Naive thymus-derived CD4-positive, alpha-beta T cell (primary cell): ENCODE measurements at regions of chr3 and their contacts with region 1.

Region 1: GRCh38 chr3:50298836-50299637 is at the starts of genes HYAL3 and NAA80:
- DNase-seq: peak; percentile 94 to 100 (median 99)
- ATAC-seq: peak; percentile 93
- H3K4me3 ChIP-seq: peak within 1 kb of the TSS; percentile 97
- H3K4me3 Mint-ChIP-seq: peak within 1 kb of the TSS; percentile 84 to 99 (median 97)
- H3K27ac ChIP-seq: peak within 1 kb of the TSS; percentile 86
- H3K27ac Mint-ChIP-seq: peak within 1 kb of the TSS; percentile 90 to 100 (median 99)
- H3K4me1 ChIP-seq: peaks cover 19 to 20% of the 10 kb centered on the region in 2 donors
- H3K4me1 Mint-ChIP-seq: peaks cover 12 to 36% (median 22%) of the 10 kb centered on the region in 7 donors
- H3K27me3 ChIP-seq: no peaks in the 10 kb centered on the region
- H3K27me3 Mint-ChIP-seq: no peaks in the 10 kb centered on the region
- total RNA-seq, gene HYAL3: 3.4 to 10.7 (median 4.2) TPM
- total RNA-seq, gene NAA80: 30.2 to 44.9 (median 33.6) TPM

Region 2: GRCh38 chr3:48472915-48473616 is 1826.0 kb before region 1 on chr3:
- CTCF ChIA-PET with region 1: no interaction called
- POLR2A ChIA-PET with region 1: no interaction called
- intact Hi-C with region 1: loop called in 1 of 2 experiments (anchors 10 kb)
- DNase-seq: peak; percentile 79 to 98 (median 95)
- ATAC-seq: peak; percentile 93
- H3K4me3 ChIP-seq: peak overlapping the region; percentile 92
- H3K4me3 Mint-ChIP-seq: peak overlapping the region; percentile 87 to 100 (median 94)
- H3K27ac ChIP-seq: peak overlapping the region; percentile 95
- H3K27ac Mint-ChIP-seq: peak overlapping the region; percentile 90 to 100 (median 99)
- H3K4me1 ChIP-seq: peaks cover 46 to 54% of the 10 kb centered on the region in 2 donors
- H3K4me1 Mint-ChIP-seq: peaks cover 41 to 75% (median 64%) of the 10 kb centered on the region in 7 donors
- H3K27me3 ChIP-seq: no peaks in the 10 kb centered on the region
- H3K27me3 Mint-ChIP-seq: peaks cover 0 to 2% (median 0%) of the 10 kb centered on the region in 5 donors

Region 3: GRCh38 chr3:49802719-49803464 is 496.1 kb before region 1 on chr3 and contains the start of gene INKA1:
- CTCF ChIA-PET with region 1: no interaction called
- POLR2A ChIA-PET with region 1: no interaction called
- intact Hi-C with region 1: loop called in 1 of 2 experiments (anchors 10 kb)
- DNase-seq: peak; percentile 77 to 89 (median 87)
- ATAC-seq: peak; percentile 93
- H3K4me3 ChIP-seq: peak within 1 kb of the TSS; percentile 89
- H3K4me3 Mint-ChIP-seq: peak within 1 kb of the TSS; percentile 82 to 95 (median 90)
- H3K27ac ChIP-seq: peak within 1 kb of the TSS; percentile 84
- H3K27ac Mint-ChIP-seq: peak within 1 kb of the TSS; percentile 80 to 96 (median 91)
- H3K4me1 ChIP-seq: peaks cover 11 to 41% of the 10 kb centered on the region in 2 donors
- H3K4me1 Mint-ChIP-seq: peaks cover 23 to 47% (median 41%) of the 10 kb centered on the region in 7 donors
- H3K27me3 ChIP-seq: no peaks in the 10 kb centered on the region
- H3K27me3 Mint-ChIP-seq: peaks cover 0 to 20% (median 0%) of the 10 kb centered on the region in 5 donors
- total RNA-seq, gene INKA1: 0.65 to 2.2 (median 1.8) TPM

Region 4: GRCh38 chr3:50235716-50236496 is 63.1 kb before region 1 on chr3 and contains the start of gene GNAI2:
- CTCF ChIA-PET with region 1: interaction called, 3 read pairs
- POLR2A ChIA-PET with region 1: interaction called, 10 read pairs
- intact Hi-C with region 1: loop called (anchors 1 kb)
- DNase-seq: peak; percentile 95 to 99 (median 99)
- ATAC-seq: peak; percentile 93
- H3K4me3 ChIP-seq: peak within 1 kb of the TSS; percentile 90
- H3K4me3 Mint-ChIP-seq: peak within 1 kb of the TSS; percentile 92 to 99 (median 98)
- H3K27ac ChIP-seq: peak within 1 kb of the TSS; percentile 84
- H3K27ac Mint-ChIP-seq: peak within 1 kb of the TSS; percentile 87 to 97 (median 95)
- H3K4me1 ChIP-seq: peaks cover 30 to 35% of the 10 kb centered on the region in 2 donors
- H3K4me1 Mint-ChIP-seq: peaks cover 12 to 41% (median 37%) of the 10 kb centered on the region in 7 donors
- H3K27me3 ChIP-seq: no peaks in the 10 kb centered on the region
- H3K27me3 Mint-ChIP-seq: no peaks in the 10 kb centered on the region
- total RNA-seq, gene GNAI2: 225 to 442 (median 282) TPM

Region 5: GRCh38 chr3:50264370-50264963 is 34.6 kb before region 1 on chr3:
- CTCF ChIA-PET with region 1: no interaction called
- POLR2A ChIA-PET with region 1: no interaction called
- intact Hi-C with region 1: no loop called
- DNase-seq: no peak
- ATAC-seq: no peak
- H3K4me3 ChIP-seq: no peak overlapping the region
- H3K4me3 Mint-ChIP-seq: no peak overlapping the region
- H3K27ac ChIP-seq: no peak overlapping the region
- H3K27ac Mint-ChIP-seq: no peak overlapping the region
- H3K4me1 ChIP-seq: peaks cover 4 to 6% of the 10 kb centered on the region in 2 donors
- H3K4me1 Mint-ChIP-seq: peaks cover 0 to 8% (median 3%) of the 10 kb centered on the region in 7 donors
- H3K27me3 ChIP-seq: no peaks in the 10 kb centered on the region
- H3K27me3 Mint-ChIP-seq: peaks cover 0 to 30% (median 0%) of the 10 kb centered on the region in 5 donors

Region 6: DNA sequence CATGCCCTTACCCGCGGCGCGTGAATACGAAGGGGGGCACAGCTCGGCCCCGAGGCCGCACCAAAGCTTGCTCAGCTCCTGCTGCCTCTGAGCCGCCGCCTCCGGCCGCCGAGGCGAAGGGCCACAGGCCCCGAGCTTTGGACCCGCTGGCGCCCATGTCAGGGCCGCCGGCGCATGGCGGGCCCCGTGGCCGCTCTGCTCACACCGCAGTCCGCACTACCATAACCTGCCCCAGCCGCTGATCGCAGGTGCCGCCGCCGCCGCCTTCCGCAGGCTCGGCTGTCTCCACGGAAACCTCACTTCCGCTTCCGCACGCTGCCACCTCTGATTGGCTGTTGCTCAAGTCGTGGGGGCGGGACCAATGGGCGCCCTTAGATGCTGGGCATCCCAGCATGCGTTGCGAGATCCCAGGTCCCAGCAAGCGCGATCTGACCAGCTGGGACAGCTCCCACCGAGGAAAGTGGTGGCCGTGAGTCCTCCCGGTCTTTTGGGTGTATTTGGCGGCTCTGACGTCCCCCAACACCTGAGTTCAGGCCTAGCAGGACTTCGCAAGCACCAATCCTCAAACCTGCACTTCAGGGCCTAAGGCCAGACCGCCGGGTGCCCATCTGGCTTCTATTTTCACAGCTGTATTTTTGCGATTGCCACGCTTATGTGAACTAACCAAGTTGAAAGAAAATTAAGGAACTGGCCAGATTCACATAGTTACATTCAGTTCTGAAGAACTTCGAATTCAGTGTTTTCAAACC is 29.1 kb after region 1 on chr3 and contains the start of gene TUSC2:
- CTCF ChIA-PET with region 1: interaction called, 5 read pairs
- POLR2A ChIA-PET with region 1: interaction called, 31 read pairs
- intact Hi-C with region 1: loop called (anchors 1 to 2 kb)
- DNase-seq: peak; percentile 83 to 94 (median 92)
- ATAC-seq: peak; percentile 97
- H3K4me3 ChIP-seq: peak within 1 kb of the TSS; percentile 89
- H3K4me3 Mint-ChIP-seq: peak within 1 kb of the TSS; percentile 84 to 97 (median 95)
- H3K27ac ChIP-seq: peak within 1 kb of the TSS; percentile 92
- H3K27ac Mint-ChIP-seq: peak within 1 kb of the TSS; percentile 85 to 96 (median 94)
- H3K4me1 ChIP-seq: peaks cover 12 to 15% of the 10 kb centered on the region in 2 donors
- H3K4me1 Mint-ChIP-seq: peaks cover 7 to 41% (median 29%) of the 10 kb centered on the region in 7 donors
- H3K27me3 ChIP-seq: no peaks in the 10 kb centered on the region
- H3K27me3 Mint-ChIP-seq: no peaks in the 10 kb centered on the region
- total RNA-seq, gene TUSC2: 16.8 to 25.0 (median 20.5) TPM

Region 7: DNA sequence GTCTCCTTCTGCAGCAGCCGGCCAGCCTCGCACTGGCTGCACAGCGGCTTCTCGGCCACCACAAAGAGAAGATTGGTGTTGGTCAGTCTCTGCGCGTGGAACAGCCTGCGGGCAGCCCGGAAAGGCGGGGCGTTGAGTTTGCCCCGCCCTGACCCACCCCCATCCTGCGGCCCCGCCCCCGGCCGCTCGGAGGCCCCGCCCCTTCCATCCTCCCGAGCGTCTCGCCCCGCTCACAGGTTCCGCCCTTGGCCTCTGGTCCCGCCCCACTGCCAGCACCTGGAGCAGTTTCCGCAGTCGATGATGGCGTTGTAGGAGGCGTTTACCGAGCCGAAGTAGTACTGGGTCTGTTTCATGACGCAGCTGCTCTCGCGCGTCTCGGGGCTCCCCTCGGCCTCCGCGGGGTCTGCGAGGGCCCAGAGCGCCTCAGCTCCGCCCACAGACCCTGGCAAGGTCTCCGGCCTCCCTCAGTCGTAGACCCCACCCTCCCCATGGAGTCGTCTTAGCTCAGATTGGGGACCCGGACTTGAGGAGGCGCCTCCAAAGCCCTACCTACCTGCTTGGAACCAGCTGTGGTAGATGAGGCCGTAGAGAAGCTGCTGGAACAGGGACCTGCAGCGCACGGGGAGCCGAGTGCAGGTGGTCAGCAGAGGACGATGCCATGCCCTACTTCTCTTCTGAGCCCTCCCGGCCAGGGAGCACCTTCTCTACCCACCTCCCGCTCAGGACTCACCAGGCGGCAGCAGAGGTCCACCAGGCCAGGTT is 66.2 kb after region 1 on chr3:
- CTCF ChIA-PET with region 1: no interaction called
- POLR2A ChIA-PET with region 1: interaction called, 9 read pairs
- intact Hi-C with region 1: loop called in 1 of 2 experiments (anchors 1 kb)
- DNase-seq: peak; percentile 82 to 96 (median 94)
- ATAC-seq: peak; percentile 97
- H3K4me3 ChIP-seq: peak overlapping the region; percentile 99
- H3K4me3 Mint-ChIP-seq: peak overlapping the region; percentile 82 to 93 (median 90)
- H3K27ac ChIP-seq: peak overlapping the region; percentile 95
- H3K27ac Mint-ChIP-seq: peak overlapping the region; percentile 87 to 97 (median 94)
- H3K4me1 ChIP-seq: peaks cover 13 to 18% of the 10 kb centered on the region in 2 donors
- H3K4me1 Mint-ChIP-seq: peaks cover 8 to 36% (median 20%) of the 10 kb centered on the region in 7 donors
- H3K27me3 ChIP-seq: no peaks in the 10 kb centered on the region
- H3K27me3 Mint-ChIP-seq: no peaks in the 10 kb centered on the region